Head of caudate nucleus (tissue), 42 donors: ENCODE measurements at regions of chr18 and their contacts with region 1.

Region 1: GRCh38 chr18:23623040-23623439 is 36.7 kb upstream of the NPC1 start:
- DNase-seq: no peak

Region 2: GRCh38 chr18:23515911-23516546 is 107.0 kb before region 1 on chr18:
- intact Hi-C with region 1: no loop called
- DNase-seq: peak; percentile 54 to 93 (median 84)

Region 3: GRCh38 chr18:23547846-23548245 is 75.2 kb before region 1 on chr18:
- intact Hi-C with region 1: no loop called
- DNase-seq: no peak

Region 4: GRCh38 chr18:23812546-23813440 is 189.8 kb after region 1 on chr18:
- intact Hi-C with region 1: loop called (anchors 5 kb)
- DNase-seq: no peak